ENCODE measurements at regions of chr1 and their contacts with region 1.

Region 1: GRCh38 chr1:88877382-88877825 is 14.0 kb downstream of the GTF2B start:
- DNase-seq: no peak
- H3K4me3 Mint-ChIP-seq: no peak overlapping the region
- H3K27ac Mint-ChIP-seq: no peak overlapping the region
- H3K4me1 Mint-ChIP-seq: peaks cover 21% of the 10 kb centered on the region
- H3K27me3 Mint-ChIP-seq: no peaks in the 10 kb centered on the region

Region 2: DNA sequence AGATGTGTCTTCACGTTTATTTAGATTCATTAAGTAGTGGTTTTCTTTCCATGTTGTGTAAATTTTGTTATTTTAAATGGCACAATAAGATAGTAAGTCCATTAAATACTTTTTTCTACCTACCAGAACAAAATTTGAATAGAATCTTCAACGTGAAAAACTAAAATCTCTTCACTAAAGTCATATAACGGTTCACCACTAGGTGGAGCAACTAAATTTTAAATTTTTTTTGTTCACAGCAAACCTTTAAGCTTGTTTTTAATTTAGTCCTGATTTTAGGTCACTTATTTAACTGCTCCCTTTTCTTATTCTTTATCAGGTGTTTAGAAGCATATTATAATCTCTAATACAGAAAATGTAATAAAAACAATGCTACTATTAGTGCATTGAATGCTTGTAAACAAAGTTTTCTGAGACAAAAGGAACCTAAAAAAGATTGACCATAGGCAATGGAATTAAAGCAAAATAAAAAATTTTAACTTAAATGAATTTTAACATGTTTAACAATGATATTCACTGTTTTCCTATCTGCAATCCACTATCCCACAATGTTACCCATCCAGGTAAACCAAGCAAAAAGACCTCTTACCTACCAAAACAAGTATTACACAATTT is 221.6 kb before region 1 on chr1:
- CTCF ChIA-PET with region 1: interaction called, 47 read pairs
- POLR2A ChIA-PET with region 1: interaction called, 3 read pairs
- DNase-seq: no peak
- H3K4me3 Mint-ChIP-seq: no peak overlapping the region
- H3K27ac Mint-ChIP-seq: no peak overlapping the region
- H3K4me1 Mint-ChIP-seq: peaks cover 7% of the 10 kb centered on the region
- H3K27me3 Mint-ChIP-seq: peaks cover 2% of the 10 kb centered on the region

Region 3: DNA sequence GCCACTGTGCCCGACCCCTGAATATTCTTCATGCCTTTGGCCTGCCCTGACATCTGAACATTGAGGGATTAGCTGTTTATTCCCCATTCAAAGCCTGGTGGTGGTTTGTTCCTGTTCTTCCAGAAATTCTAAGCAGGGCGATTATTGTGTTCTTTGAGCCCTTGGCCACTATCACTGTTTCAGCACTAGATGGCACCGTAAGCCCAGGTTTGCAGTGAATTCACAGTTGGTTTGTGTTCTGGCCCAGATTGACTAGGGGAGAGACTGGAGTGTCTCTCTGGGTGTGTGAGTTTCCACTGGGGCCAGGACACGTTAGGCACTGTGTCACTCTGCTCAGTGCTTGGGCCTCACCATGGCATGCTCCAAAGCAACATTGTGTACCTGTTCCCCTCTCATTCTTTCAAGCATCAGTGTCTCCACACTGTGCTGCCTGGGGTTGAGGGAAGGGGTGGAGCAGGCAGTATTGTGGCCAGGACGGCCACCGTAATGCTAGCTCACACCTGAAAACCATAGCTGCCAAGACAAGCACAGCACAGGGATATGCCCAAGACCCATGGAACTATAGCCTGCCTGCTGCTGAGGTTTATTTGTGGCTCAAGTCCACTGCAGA is 140.7 kb before region 1 on chr1:
- CTCF ChIA-PET with region 1: interaction called, 32 read pairs
- POLR2A ChIA-PET with region 1: no interaction called
- DNase-seq: peak; percentile 49
- H3K4me3 Mint-ChIP-seq: no peak overlapping the region
- H3K27ac Mint-ChIP-seq: no peak overlapping the region
- H3K4me1 Mint-ChIP-seq: peaks cover 7% of the 10 kb centered on the region
- H3K27me3 Mint-ChIP-seq: no peaks in the 10 kb centered on the region

Region 4: DNA sequence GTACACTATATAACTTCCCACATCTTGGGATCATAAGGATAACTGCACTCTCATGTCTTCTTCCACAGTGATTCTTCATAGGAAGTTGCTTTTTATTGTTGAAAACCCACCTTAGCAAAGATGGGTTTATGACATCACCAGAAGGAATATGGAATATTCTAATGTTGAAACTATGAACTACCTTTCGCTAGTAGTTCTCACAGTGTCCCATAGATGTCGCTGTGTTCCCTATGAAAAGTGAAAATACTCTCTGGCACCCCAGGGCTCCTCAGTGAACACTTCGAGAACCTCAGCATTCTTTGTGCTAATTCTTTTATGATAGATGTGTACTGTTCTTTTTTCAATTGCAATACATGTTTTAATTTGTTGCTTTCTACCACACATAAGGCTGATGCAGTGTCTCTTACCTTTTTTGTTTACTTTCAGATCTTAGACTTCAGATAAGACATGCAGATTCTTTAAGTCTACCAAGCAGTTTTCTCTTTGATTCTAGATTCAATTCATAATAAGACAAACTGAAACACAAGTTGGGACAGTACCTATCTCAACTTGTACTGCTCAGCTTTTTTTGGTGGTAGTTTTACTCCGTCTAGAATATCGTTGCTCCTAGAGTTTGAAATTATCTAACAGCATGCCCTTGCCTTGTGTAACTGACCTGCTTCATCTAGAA is 76.9 kb before region 1 on chr1:
- CTCF ChIA-PET with region 1: interaction called, 10 read pairs
- POLR2A ChIA-PET with region 1: no interaction called
- DNase-seq: peak; percentile 33
- H3K4me3 Mint-ChIP-seq: no peak overlapping the region
- H3K27ac Mint-ChIP-seq: peak overlapping the region; percentile 57
- H3K4me1 Mint-ChIP-seq: peaks cover 19% of the 10 kb centered on the region
- H3K27me3 Mint-ChIP-seq: no peaks in the 10 kb centered on the region

Region 5: DNA sequence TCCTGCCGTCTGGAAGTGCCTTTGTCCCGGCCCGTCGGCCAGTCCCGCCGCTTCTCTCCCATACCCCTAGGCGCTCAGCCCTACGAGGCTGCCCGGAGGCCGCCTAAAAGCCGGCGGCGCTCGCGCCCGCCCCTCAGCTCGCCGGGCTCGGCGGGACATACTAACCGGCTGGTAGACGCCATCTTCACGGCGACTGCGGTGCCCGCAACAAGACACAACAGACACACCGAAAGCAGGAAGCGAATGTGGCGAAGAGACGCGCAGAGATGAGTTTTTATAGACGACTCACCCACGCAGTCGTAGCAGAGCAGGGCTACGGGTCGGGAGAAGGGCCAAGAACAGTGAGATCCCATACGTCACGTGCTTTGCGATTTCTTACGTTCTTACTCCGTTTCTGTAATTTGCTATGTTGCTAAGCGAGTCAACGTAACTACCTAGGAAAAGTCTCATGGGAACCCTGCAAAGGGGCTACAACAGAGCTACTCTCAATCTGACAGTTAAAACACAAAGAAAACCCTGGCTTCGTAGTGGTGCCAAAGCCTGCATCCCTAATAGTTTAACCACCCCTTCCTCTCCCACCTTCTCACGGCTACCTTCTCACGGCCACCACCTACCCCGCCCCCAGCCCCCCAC is 14.0 kb after region 1 on chr1 and contains the start of gene GTF2B:
- CTCF ChIA-PET with region 1: interaction called, 28 read pairs
- POLR2A ChIA-PET with region 1: interaction called, 18 read pairs
- DNase-seq: peak; percentile 96
- H3K4me3 Mint-ChIP-seq: peak within 1 kb of the TSS; percentile 92
- H3K27ac Mint-ChIP-seq: peak within 1 kb of the TSS; percentile 93
- H3K4me1 Mint-ChIP-seq: peaks cover 46% of the 10 kb centered on the region
- H3K27me3 Mint-ChIP-seq: no peaks in the 10 kb centered on the region
- total RNA-seq, gene GTF2B: 41.9 to 47.1 TPM

Region 6: DNA sequence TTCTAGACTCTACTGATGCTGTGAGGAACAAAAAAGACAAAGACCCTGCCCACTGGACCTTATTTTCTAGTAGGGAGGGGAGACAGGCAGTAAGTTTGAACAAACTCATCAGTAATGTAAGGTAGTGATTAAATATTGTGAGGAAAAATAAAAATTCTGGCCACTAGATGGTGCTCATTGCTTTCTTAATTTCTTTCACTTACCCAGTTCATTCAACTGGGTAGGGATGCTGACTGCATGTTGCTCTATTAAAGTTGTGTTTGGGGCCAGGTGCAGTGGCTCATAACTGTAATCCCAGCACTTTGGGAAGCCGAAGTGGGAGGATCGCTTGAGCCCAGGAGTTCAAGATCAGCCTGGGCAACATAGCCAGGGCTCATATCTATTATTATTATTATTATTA is 121.3 kb after region 1 on chr1:
- CTCF ChIA-PET with region 1: no interaction called
- POLR2A ChIA-PET with region 1: no interaction called
- DNase-seq: no peak
- H3K4me3 Mint-ChIP-seq: no peak overlapping the region
- H3K27ac Mint-ChIP-seq: no peak overlapping the region
- H3K4me1 Mint-ChIP-seq: peaks cover 26% of the 10 kb centered on the region
- H3K27me3 Mint-ChIP-seq: no peaks in the 10 kb centered on the region

Measured in activated CD4-positive, alpha-beta memory T cell treated with anti-CD3 and anti-CD28 coated beads, Interleukin-2, amount 10 ng/mL, durations not matched to agents 7 days and 5 days (primary cell).